ENCODE measurements at regions of chr5 and their contacts with region 1.

Region 1: GRCh38 chr5:153147891-153148623 is 342.4 kb upstream of the GRIA1 start:
- DNase-seq: peak; percentile 82
- H3K4me3 Mint-ChIP-seq: peak overlapping the region; percentile 11
- H3K27ac Mint-ChIP-seq: no peak overlapping the region
- H3K4me1 Mint-ChIP-seq: peaks cover 14% of the 10 kb centered on the region
- H3K27me3 Mint-ChIP-seq: no peaks in the 10 kb centered on the region
- CTCF ChIP-seq: peak; percentile 87

Region 2: GRCh38 chr5:152532714-152533113 is 615.3 kb before region 1 on chr5:
- CTCF ChIA-PET with region 1: interaction called, 46 read pairs
- POLR2A ChIA-PET with region 1: no interaction called
- intact Hi-C with region 1: loop called (anchors 1 kb)
- DNase-seq: peak; percentile 75
- H3K4me3 Mint-ChIP-seq: no peak overlapping the region
- H3K27ac Mint-ChIP-seq: peak overlapping the region; percentile 24
- H3K4me1 Mint-ChIP-seq: no peaks in the 10 kb centered on the region
- H3K27me3 Mint-ChIP-seq: no peaks in the 10 kb centered on the region
- CTCF ChIP-seq: peak; percentile 80

Region 3: DNA sequence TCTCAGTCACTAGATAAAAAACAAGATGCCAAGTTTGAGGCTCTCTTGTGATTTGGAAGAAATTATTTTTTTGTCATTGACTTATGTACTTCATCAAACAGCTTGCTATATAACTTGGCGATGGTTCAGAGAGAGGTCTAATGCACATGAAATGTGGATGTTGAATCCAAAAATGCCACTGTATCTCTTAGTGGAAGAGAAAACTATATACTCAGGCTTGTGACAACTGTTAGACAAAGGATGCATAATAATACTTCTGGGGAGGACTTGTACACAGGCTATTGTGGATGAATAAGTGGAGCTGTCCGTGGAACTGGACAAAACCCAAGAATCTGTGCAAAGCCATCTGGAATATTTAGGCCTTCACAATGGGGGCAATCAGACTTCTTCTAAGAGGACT is 580.0 kb before region 1 on chr5:
- CTCF ChIA-PET with region 1: interaction called, 144 read pairs
- POLR2A ChIA-PET with region 1: interaction called, 3 read pairs
- intact Hi-C with region 1: no loop called
- DNase-seq: no peak
- H3K4me3 Mint-ChIP-seq: no peak overlapping the region
- H3K27ac Mint-ChIP-seq: no peak overlapping the region
- H3K4me1 Mint-ChIP-seq: no peaks in the 10 kb centered on the region
- H3K27me3 Mint-ChIP-seq: no peaks in the 10 kb centered on the region
- CTCF ChIP-seq: no peak

Region 4: GRCh38 chr5:152688561-152689249 is 459.4 kb before region 1 on chr5:
- CTCF ChIA-PET with region 1: interaction called, 4 read pairs
- POLR2A ChIA-PET with region 1: no interaction called
- intact Hi-C with region 1: loop called (anchors 1 kb)
- DNase-seq: peak; percentile 98
- H3K4me3 Mint-ChIP-seq: no peak overlapping the region
- H3K27ac Mint-ChIP-seq: peak overlapping the region; percentile 44
- H3K4me1 Mint-ChIP-seq: peaks cover 15% of the 10 kb centered on the region
- H3K27me3 Mint-ChIP-seq: no peaks in the 10 kb centered on the region
- CTCF ChIP-seq: no peak

Region 5: DNA sequence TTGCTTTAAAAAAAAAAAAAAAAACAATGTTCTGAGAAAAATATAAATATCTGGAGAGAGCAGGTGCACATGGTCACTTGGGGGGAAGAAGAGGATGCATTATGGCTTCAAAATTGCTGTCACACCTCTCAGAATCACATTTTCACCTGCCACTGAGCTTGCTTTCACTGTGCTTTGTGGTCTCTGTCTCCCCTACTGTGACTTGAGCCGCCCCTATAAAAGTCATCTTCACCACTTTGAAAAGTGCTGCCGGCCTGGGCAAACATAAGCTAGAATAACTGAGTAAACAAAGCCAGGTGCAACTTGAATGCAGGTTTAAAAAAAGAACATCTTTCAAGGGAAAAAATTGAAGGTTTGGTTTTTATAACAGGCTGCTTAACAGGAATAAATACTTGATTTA is 25.7 kb before region 1 on chr5:
- CTCF ChIA-PET with region 1: interaction called, 11 read pairs
- POLR2A ChIA-PET with region 1: no interaction called
- intact Hi-C with region 1: no loop called
- DNase-seq: no peak
- H3K4me3 Mint-ChIP-seq: no peak overlapping the region
- H3K27ac Mint-ChIP-seq: no peak overlapping the region
- H3K4me1 Mint-ChIP-seq: no peaks in the 10 kb centered on the region
- H3K27me3 Mint-ChIP-seq: no peaks in the 10 kb centered on the region
- CTCF ChIP-seq: no peak

Region 6: GRCh38 chr5:153159611-153160010 is 11.6 kb after region 1 on chr5:
- CTCF ChIA-PET with region 1: interaction called, 27 read pairs
- POLR2A ChIA-PET with region 1: interaction called, 3 read pairs
- intact Hi-C with region 1: no loop called
- DNase-seq: peak; percentile 64
- H3K4me3 Mint-ChIP-seq: no peak overlapping the region
- H3K27ac Mint-ChIP-seq: peak overlapping the region; percentile 7
- H3K4me1 Mint-ChIP-seq: peaks cover 27% of the 10 kb centered on the region
- H3K27me3 Mint-ChIP-seq: no peaks in the 10 kb centered on the region
- CTCF ChIP-seq: no peak

Region 7: DNA sequence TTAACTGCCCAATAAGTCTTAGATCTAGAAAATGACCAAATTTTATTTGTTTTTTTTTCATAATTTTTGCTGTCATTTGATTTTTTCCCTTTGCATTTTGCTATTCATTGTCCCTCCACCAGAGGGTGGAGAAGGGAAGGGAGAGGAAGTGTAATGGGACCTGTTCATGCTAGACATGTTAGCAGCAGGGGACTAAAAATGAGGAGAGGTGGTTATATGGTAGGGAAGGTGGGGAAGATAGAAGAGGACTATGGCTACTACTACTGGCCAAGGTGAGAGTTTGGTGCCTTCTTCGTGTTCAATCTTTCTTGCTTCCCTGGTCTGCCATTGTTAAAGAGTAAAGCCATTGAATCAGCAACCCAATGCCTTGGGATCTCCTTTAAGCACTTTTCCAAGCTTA is 348.8 kb after region 1 on chr5:
- CTCF ChIA-PET with region 1: interaction called, 3 read pairs
- POLR2A ChIA-PET with region 1: no interaction called
- intact Hi-C with region 1: loop called (anchors 1 kb)
- DNase-seq: peak; percentile 75
- H3K4me3 Mint-ChIP-seq: no peak overlapping the region
- H3K27ac Mint-ChIP-seq: no peak overlapping the region
- H3K4me1 Mint-ChIP-seq: no peaks in the 10 kb centered on the region
- H3K27me3 Mint-ChIP-seq: no peaks in the 10 kb centered on the region
- CTCF ChIP-seq: peak; percentile 97

Measured in MCF 10A (cell line).